Panc1 (cell line): ENCODE measurements at regions of chr10 and their contacts with region 1.

Region 1: DNA sequence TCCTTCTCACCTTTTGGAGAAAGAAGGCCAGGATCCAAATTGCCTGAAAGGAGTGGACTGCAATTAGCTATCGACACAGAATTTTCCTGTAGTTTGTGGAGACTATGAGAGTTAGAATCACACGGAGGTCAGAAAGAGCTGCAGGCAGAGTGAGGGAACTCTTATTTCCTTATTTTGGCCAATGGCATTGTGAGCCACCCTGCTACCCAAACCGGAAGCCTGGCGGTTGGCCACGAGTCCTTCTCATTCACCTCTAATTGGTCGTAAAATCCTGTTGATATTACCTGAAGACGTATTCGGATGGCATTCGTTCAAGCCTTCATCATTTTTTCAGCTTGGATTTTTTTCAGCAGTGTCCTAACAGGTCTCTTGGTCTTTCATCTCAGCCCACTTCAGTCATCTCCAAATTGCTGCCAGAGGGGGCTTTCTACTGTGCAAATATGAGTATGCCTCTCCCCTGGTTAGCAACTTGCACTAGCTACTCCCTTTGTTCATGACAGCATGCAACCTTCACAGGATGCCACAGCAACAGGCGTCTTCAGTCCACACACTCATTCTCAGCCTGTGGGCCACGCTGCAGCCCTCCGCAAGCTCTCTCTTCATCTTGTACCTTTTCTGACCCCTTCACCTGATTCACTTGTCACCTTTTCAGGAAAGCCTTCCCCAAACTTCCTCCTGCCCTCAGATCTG is 66.9 kb downstream of the GATA3 start:
- DNase-seq: no peak
- ATAC-seq: no peak
- H3K4me3 ChIP-seq: no peak overlapping the region
- H3K27ac ChIP-seq: no peak overlapping the region
- H3K4me1 ChIP-seq: no peaks in the 10 kb centered on the region
- H3K27me3 ChIP-seq: no peaks in the 10 kb centered on the region
- CTCF ChIP-seq: no peak

Region 2: DNA sequence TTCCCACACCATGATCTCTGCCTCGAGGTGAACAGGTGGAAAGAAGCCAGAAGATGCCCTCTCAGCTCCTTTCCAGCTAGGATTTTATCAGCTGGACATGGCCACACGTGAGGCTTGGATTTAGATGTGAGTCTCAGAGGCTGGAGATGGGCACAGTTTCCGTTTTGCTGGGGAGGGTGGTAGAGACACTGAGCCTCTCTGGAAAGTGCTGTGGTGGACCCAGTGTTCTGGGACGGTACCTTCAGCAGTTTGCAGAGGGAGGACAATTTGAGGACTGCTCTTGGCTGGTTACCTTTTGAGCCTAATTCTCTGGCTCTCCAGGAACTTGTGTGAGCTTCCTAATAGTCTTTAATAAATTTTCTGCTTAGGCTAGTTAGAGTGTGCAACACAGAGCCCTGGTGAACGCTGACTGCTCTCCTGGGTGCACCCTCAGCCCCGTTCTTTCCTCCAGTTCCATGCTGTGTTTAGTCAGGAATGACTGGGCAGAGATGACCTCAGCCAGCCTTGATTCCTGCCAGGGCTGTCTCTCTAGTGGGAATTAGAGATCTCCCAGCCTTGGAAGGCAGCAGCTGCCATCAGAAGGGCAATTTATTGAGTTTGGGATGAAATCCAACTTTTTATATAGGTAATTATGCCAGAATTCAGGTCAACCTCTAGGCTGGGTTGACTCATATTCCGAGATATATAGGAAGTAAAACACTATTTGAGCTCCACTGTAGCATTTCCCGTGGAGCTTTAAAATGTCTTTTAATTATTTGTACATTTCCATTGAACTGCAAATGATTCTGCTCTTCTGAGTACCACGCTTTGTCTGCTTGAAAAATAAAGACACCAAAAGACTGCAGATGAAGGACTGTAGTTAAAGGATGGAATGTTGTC is 37.1 kb after region 1 on chr10:
- CTCF ChIA-PET with region 1: interaction called, 10 read pairs
- POLR2A ChIA-PET with region 1: no interaction called
- in situ Hi-C with region 1: no loop called
- intact Hi-C with region 1: no loop called
- DNase-seq: no peak
- ATAC-seq: no peak
- H3K4me3 ChIP-seq: no peak overlapping the region
- H3K27ac ChIP-seq: no peak overlapping the region
- H3K4me1 ChIP-seq: no peaks in the 10 kb centered on the region
- H3K27me3 ChIP-seq: no peaks in the 10 kb centered on the region
- CTCF ChIP-seq: no peak